PC-3 (cell line): ENCODE measurements at regions of chr17 and their contacts with region 1.

Region 1: GRCh38 chr17:74296548-74296936 is 22.5 kb downstream of the DNAI2 start:
- DNase-seq: peak; percentile 67
- ATAC-seq: peak; percentile 68
- H3K4me3 ChIP-seq: no peak overlapping the region
- H3K27ac ChIP-seq: no peak overlapping the region
- H3K4me1 ChIP-seq: peaks cover 21% of the 10 kb centered on the region
- H3K27me3 ChIP-seq: no peaks in the 10 kb centered on the region
- CTCF ChIP-seq: peak; percentile 83

Region 2: DNA sequence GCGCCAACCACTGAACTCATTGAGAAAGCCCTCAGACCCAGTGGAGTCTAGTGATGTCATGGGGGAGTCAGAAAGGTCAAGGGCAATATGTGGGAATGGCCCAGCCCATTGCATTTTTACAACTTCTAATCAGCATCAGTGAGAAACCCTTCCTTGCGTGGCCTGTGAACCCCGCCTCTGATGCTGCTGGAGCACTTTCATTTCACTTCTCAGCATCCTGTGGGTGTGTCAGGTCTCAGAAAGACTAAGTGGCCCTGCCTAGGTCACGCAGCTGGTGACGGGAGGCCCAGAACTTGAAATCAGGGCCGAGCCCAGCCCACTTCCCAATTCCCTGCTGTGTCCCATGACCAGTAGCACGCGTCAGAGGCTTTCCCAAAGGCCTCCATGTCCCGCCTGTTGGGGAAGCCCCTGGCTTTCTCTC is 16.4 kb before region 1 on chr17:
- CTCF ChIA-PET with region 1: interaction called, 25 read pairs
- POLR2A ChIA-PET with region 1: no interaction called
- intact Hi-C with region 1: no loop called
- DNase-seq: no peak
- ATAC-seq: no peak
- H3K4me3 ChIP-seq: no peak overlapping the region
- H3K27ac ChIP-seq: no peak overlapping the region
- H3K4me1 ChIP-seq: peaks cover 13% of the 10 kb centered on the region
- H3K27me3 ChIP-seq: no peaks in the 10 kb centered on the region
- CTCF ChIP-seq: no peak